ENCODE measurements at regions of chr2 and their contacts with region 1.

Region 1: GRCh38 chr2:105749583-105750400 is 5.1 kb downstream of the NCK2 start:
- DNase-seq: peak in 3 of 5 donors; percentile 32 to 63 (median 37)
- H3K4me3 ChIP-seq: peak overlapping the region; percentile 21 to 48
- H3K4me3 Mint-ChIP-seq: peak overlapping the region; percentile 88 to 99 (median 92)
- H3K27ac ChIP-seq: peak overlapping the region; percentile 78
- H3K27ac Mint-ChIP-seq: peak overlapping the region; percentile 92 to 99 (median 97)
- H3K4me1 ChIP-seq: peaks cover 81% of the 10 kb centered on the region
- H3K4me1 Mint-ChIP-seq: peaks cover 60 to 93% (median 75%) of the 10 kb centered on the region in 4 donors
- H3K27me3 ChIP-seq: no peaks in the 10 kb centered on the region
- H3K27me3 Mint-ChIP-seq: no peaks in the 10 kb centered on the region

Region 2: GRCh38 chr2:105737980-105738657 is 11.7 kb before region 1 on chr2:
- CTCF ChIA-PET with region 1: interaction called, 11 read pairs
- POLR2A ChIA-PET with region 1: interaction called, 52 read pairs
- intact Hi-C with region 1: loop called (anchors 1 kb)
- DNase-seq: peak in 4 of 5 donors; percentile 64 to 73 (median 68)
- H3K4me3 ChIP-seq: peak overlapping the region; percentile 1 to 7
- H3K4me3 Mint-ChIP-seq: peak overlapping the region; percentile 64 to 86 (median 80)
- H3K27ac ChIP-seq: peak overlapping the region; percentile 77
- H3K27ac Mint-ChIP-seq: peak overlapping the region; percentile 93 to 98 (median 97)
- H3K4me1 ChIP-seq: peaks cover 94% of the 10 kb centered on the region
- H3K4me1 Mint-ChIP-seq: peaks cover 65 to 92% (median 76%) of the 10 kb centered on the region in 4 donors
- H3K27me3 ChIP-seq: no peaks in the 10 kb centered on the region
- H3K27me3 Mint-ChIP-seq: no peaks in the 10 kb centered on the region

Region 3: DNA sequence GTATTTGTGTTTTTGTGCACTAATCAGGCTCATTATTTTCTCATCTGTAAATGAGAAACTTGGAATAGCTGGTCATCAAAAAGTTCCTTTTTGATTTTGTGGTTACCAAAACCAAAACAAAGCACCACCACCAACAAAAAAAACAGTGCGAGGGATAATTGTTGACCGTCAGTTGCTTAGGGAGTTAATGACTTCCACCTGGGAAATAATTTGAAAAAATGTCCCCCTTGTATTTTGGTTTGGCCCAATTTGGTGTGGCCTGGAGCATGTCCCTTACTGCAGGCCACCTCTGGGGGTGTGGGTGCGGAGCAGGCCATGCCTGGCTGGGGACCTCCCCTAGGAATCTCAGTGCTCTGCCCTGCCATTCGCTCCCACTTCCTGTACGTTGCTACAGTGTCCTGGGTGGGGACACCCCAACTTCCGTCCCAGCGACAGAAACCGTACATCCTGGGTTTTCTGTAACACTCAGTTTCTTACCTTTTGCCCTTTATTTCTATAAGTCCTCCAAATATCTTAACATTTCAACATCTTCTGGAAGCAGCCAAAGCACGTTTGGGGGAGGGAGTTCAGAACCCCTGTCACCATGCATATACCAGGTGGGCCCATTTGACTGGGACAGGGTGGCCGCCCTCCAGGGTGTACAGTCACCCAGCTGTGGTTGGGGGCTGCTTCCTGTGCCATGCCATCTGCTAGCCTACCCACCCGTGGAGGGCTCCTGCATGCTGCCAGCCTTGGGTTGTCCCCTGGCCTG is 26.2 kb after region 1 on chr2:
- CTCF ChIA-PET with region 1: interaction called, 14 read pairs
- POLR2A ChIA-PET with region 1: interaction called, 82 read pairs
- intact Hi-C with region 1: loop called (anchors 2 kb)
- DNase-seq: peak in 3 of 5 donors; percentile 48 to 66 (median 48)
- H3K4me3 ChIP-seq: peak overlapping the region; percentile 3 to 55
- H3K4me3 Mint-ChIP-seq: peak overlapping the region; percentile 73 to 90 (median 82)
- H3K27ac ChIP-seq: peak overlapping the region; percentile 71
- H3K27ac Mint-ChIP-seq: peak overlapping the region; percentile 91 to 98 (median 97)
- H3K4me1 ChIP-seq: peaks cover 100% of the 10 kb centered on the region
- H3K4me1 Mint-ChIP-seq: peaks cover 76 to 98% (median 91%) of the 10 kb centered on the region in 4 donors
- H3K27me3 ChIP-seq: no peaks in the 10 kb centered on the region
- H3K27me3 Mint-ChIP-seq: no peaks in the 10 kb centered on the region